ENCODE measurements at regions of chr6 and their contacts with region 1.

Region 1: GRCh38 chr6:138817822-138818308 is 22.0 kb downstream of the ECT2L start:
- DNase-seq: peak; percentile 100
- H3K4me3 ChIP-seq: no peak overlapping the region
- H3K27ac ChIP-seq: peak overlapping the region; percentile 98
- H3K4me1 ChIP-seq: peaks cover 53% of the 10 kb centered on the region
- H3K27me3 ChIP-seq: no peaks in the 10 kb centered on the region
- CTCF ChIP-seq: no peak

Region 2: GRCh38 chr6:138328210-138328609 is 489.7 kb before region 1 on chr6:
- CTCF ChIA-PET with region 1: no interaction called
- dilution Hi-C with region 1: no loop called
- in situ Hi-C with region 1: no loop called
- intact Hi-C with region 1: no loop called
- DNase-seq: no peak
- H3K4me3 ChIP-seq: no peak overlapping the region
- H3K27ac ChIP-seq: no peak overlapping the region
- H3K4me1 ChIP-seq: no peaks in the 10 kb centered on the region
- H3K27me3 ChIP-seq: no peaks in the 10 kb centered on the region
- CTCF ChIP-seq: no peak

Region 3: GRCh38 chr6:138914701-138915100 is 96.8 kb after region 1 on chr6:
- CTCF ChIA-PET with region 1: no interaction called
- dilution Hi-C with region 1: no loop called
- in situ Hi-C with region 1: no loop called
- intact Hi-C with region 1: loop called (anchors 2 kb)
- DNase-seq: peak; percentile 50
- H3K4me3 ChIP-seq: no peak overlapping the region
- H3K27ac ChIP-seq: peak overlapping the region; percentile 39
- H3K4me1 ChIP-seq: peaks cover 17% of the 10 kb centered on the region
- H3K27me3 ChIP-seq: no peaks in the 10 kb centered on the region
- CTCF ChIP-seq: no peak

Region 4: DNA sequence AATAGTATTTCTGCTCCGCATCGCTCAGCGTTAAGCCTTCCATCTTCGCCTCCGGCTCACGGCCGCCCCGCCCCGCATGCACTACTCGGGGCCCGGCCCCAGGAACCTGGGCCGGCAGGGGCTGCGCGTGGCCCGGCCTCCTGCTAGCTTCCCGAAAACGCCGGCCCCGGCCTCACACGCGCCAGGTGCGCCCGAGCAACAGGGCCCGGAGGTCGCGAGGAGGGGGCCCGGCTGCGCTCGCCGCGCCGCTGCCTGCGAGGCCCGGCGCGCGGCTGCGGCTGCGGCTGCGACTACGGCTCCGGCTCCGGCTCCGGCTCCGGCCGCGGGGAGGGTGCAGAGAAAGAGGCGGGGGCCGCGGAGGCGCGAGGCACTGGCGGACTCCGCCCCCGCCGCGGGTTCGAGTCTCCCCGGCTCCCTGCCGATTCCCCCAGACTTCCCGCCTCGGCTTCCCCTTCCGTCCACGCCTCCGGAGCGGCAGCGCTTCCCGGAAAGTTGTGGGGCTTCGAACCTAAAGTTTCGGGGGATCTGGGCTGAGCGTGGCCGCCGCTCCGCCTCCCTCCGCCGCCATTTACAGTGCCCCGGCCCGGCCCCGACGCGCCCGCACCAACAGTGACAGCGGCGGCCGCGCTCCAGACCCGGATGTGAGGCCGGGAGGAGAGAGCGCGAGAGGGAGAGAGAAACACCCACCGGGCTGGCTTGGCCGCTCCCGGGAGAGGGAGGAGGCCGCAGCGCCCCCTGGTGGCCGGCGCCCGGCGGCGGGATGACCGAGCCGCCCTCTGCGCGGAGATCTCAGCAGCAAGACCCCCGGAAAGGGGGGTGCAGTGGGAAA is 170.0 kb after region 1 on chr6 and contains the start of gene REPS1:
- CTCF ChIA-PET with region 1: interaction called, 5 read pairs
- dilution Hi-C with region 1: no loop called
- in situ Hi-C with region 1: loop called (anchors 5 kb)
- intact Hi-C with region 1: loop called (anchors 1 kb)
- DNase-seq: peak; percentile 84
- H3K4me3 ChIP-seq: peak within 1 kb of the TSS; percentile 94 to 99 (median 95)
- H3K27ac ChIP-seq: peak within 1 kb of the TSS; percentile 85
- H3K4me1 ChIP-seq: peaks cover 25% of the 10 kb centered on the region
- H3K27me3 ChIP-seq: no peaks in the 10 kb centered on the region
- CTCF ChIP-seq: peak; percentile 49 to 90
- total RNA-seq, gene REPS1: 39.5 to 55.8 TPM

Region 5: GRCh38 chr6:139219271-139219729 is 401.4 kb after region 1 on chr6:
- CTCF ChIA-PET with region 1: interaction called, 3 read pairs
- dilution Hi-C with region 1: no loop called
- in situ Hi-C with region 1: no loop called
- intact Hi-C with region 1: loop called (anchors 1 kb)
- DNase-seq: peak; percentile 87
- H3K4me3 ChIP-seq: no peak overlapping the region
- H3K27ac ChIP-seq: peak overlapping the region; percentile 38
- H3K4me1 ChIP-seq: peaks cover 4% of the 10 kb centered on the region
- H3K27me3 ChIP-seq: no peaks in the 10 kb centered on the region
- CTCF ChIP-seq: peak; percentile 78 to 98

Region 6: GRCh38 chr6:139355172-139355571 is 537.3 kb after region 1 on chr6:
- CTCF ChIA-PET with region 1: no interaction called
- dilution Hi-C with region 1: no loop called
- in situ Hi-C with region 1: loop called (anchors 10 kb)
- intact Hi-C with region 1: no loop called
- DNase-seq: no peak
- H3K4me3 ChIP-seq: no peak overlapping the region
- H3K27ac ChIP-seq: no peak overlapping the region
- H3K4me1 ChIP-seq: peaks cover 2% of the 10 kb centered on the region
- H3K27me3 ChIP-seq: no peaks in the 10 kb centered on the region
- CTCF ChIP-seq: no peak

Measured in mammary epithelial cell (primary cell).